MCF 10A (cell line): ENCODE measurements at regions of chr3 and their contacts with region 1.

Region 1: GRCh38 chr3:108552267-108553159 is 36.7 kb downstream of the CIP2A start:
- DNase-seq: peak; percentile 61
- H3K4me3 Mint-ChIP-seq: no peak overlapping the region
- H3K27ac Mint-ChIP-seq: peak overlapping the region; percentile 28
- H3K4me1 Mint-ChIP-seq: peaks cover 7% of the 10 kb centered on the region
- H3K27me3 Mint-ChIP-seq: no peaks in the 10 kb centered on the region
- CTCF ChIP-seq: peak; percentile 40

Region 2: GRCh38 chr3:108477511-108478147 is 74.9 kb before region 1 on chr3:
- CTCF ChIA-PET with region 1: interaction called, 17 read pairs
- POLR2A ChIA-PET with region 1: no interaction called
- intact Hi-C with region 1: no loop called
- DNase-seq: peak; percentile 77
- H3K4me3 Mint-ChIP-seq: no peak overlapping the region
- H3K27ac Mint-ChIP-seq: no peak overlapping the region
- H3K4me1 Mint-ChIP-seq: no peaks in the 10 kb centered on the region
- H3K27me3 Mint-ChIP-seq: no peaks in the 10 kb centered on the region
- CTCF ChIP-seq: peak; percentile 62

Region 3: GRCh38 chr3:108500728-108501127 is 51.8 kb before region 1 on chr3:
- CTCF ChIA-PET with region 1: interaction called, 321 read pairs
- POLR2A ChIA-PET with region 1: interaction called, 4 read pairs
- intact Hi-C with region 1: no loop called
- DNase-seq: peak; percentile 6
- H3K4me3 Mint-ChIP-seq: no peak overlapping the region
- H3K27ac Mint-ChIP-seq: no peak overlapping the region
- H3K4me1 Mint-ChIP-seq: no peaks in the 10 kb centered on the region
- H3K27me3 Mint-ChIP-seq: no peaks in the 10 kb centered on the region
- CTCF ChIP-seq: no peak

Region 4: GRCh38 chr3:108505811-108506210 is 46.7 kb before region 1 on chr3:
- CTCF ChIA-PET with region 1: interaction called, 21 read pairs
- POLR2A ChIA-PET with region 1: no interaction called
- intact Hi-C with region 1: no loop called
- DNase-seq: no peak
- H3K4me3 Mint-ChIP-seq: no peak overlapping the region
- H3K27ac Mint-ChIP-seq: no peak overlapping the region
- H3K4me1 Mint-ChIP-seq: no peaks in the 10 kb centered on the region
- H3K27me3 Mint-ChIP-seq: no peaks in the 10 kb centered on the region
- CTCF ChIP-seq: no peak

Region 5: DNA sequence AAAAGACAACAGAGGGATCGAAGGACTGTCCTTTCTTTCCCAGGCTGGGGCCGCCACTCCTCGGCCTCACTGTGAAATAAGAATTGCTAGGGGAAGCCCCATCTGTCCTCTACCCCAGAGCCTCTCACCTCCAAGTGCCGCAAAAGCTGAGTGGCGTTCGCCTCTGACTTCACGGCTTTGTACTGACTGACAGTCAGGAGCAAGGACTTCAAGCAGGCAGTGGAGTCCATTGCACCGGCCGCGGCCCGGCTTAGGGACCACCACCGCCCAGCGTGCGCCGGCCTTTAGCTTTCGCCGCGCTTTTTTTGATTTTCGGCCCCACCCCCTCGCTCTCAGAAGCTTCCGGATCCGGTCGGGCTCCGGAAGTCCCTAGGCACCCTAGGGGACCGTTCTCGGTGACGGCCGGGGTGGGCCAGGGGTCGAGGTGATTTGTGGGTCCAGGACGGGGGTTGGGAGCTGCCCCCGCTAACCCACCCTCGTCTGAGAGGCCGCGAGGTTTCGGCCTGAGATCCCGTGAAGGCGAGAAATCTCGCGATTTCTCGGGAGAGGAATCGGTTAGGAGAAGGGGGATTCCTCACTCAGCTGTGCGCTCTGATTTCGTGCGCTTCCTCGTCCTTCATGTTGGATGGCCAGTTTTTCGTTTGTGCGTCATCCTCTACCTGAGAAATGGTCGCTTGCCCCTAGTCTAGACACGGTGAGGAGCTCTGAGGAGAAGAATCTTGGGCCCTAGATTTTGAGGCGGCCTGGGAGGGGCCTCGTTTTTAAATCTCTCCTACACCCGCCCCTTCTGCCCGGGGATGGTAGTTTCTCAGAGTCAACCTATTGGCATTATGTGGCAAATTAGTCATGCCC is 36.9 kb after region 1 on chr3 and contains the starts of genes CIP2A and DZIP3:
- CTCF ChIA-PET with region 1: interaction called, 15 read pairs
- POLR2A ChIA-PET with region 1: interaction called, 11 read pairs
- intact Hi-C with region 1: no loop called
- DNase-seq: peak; percentile 93
- H3K4me3 Mint-ChIP-seq: peak within 1 kb of the TSS; percentile 98
- H3K27ac Mint-ChIP-seq: peak within 1 kb of the TSS; percentile 100
- H3K4me1 Mint-ChIP-seq: peaks cover 46% of the 10 kb centered on the region
- H3K27me3 Mint-ChIP-seq: no peaks in the 10 kb centered on the region
- CTCF ChIP-seq: no peak
- total RNA-seq, gene CIP2A: 15.5 and 23.9 TPM in 2 replicates
- total RNA-seq, gene DZIP3: 10.1 and 10.3 TPM in 2 replicates